ENCODE measurements at regions of chr10 and their contacts with region 1.

Region 1: DNA sequence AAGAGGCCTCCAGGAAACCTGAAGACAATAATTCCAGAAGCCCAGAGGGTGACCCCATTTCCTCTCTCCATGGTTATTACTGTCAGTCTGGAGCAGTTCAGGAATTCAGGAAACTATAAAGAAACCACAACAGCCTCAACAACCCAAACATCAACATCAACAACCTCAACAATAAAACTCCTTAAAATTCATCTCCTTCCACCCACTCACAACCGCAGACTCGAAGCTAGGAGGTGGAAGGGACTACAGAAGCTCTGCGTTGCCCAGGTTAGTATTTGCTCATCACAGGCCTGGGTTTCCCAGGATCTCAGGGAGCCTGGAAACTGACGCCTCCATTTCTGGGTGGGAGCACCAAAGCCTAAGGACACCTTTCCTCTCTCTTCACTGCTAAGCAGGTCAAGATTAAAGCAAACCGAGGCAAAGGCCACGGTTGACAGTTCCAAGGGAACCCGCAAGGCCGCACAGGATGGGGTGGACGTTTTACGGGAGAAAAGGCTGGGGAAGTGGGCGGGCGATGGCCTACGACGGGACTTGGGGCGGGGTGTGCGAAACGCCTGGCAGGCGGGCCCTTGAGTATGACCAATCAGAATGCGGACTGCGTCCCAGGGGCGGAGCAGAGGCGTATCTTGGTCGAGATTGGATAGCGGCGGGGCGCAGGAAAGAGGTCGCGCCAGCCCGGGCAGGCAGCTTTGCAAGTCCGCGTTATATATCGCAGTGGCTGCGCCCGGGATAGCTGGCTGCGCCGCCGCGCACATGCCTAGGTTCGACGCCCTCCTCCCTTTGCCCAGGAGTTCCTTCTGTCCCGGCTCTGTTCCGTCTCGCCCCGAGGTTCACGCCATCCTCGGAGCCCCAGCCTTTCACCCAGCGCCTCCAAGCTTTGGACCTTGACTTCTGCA is at the start of gene ELOVL3:
- DNase-seq: peak; percentile 96
- ATAC-seq: peak; percentile 84
- H3K4me3 ChIP-seq: peak within 1 kb of the TSS; percentile 19 to 51
- H3K27ac ChIP-seq: no peak within 1 kb of the TSS; the same call in 1 of the 2 replicates
- H3K4me1 ChIP-seq: peaks cover 17 to 28% of the 10 kb centered on the region in 2 experiments
- H3K27me3 ChIP-seq: no peaks in the 10 kb centered on the region
- CTCF ChIP-seq: no peak
- POLR2A ChIP-seq: peak; percentile 80
- RAD21 ChIP-seq: no peak
- total RNA-seq, gene ELOVL3: 5.5 TPM

Region 2: GRCh38 chr10:100803492-100803891 is 1422.4 kb before region 1 on chr10:
- CTCF ChIA-PET with region 1: no interaction called
- POLR2A ChIA-PET with region 1: no interaction called
- RAD21 ChIA-PET with region 1: no interaction called
- intact Hi-C with region 1: no loop called
- DNase-seq: no peak
- ATAC-seq: no peak
- H3K4me3 ChIP-seq: no peak overlapping the region
- H3K27ac ChIP-seq: no peak overlapping the region
- H3K4me1 ChIP-seq: no peaks in the 10 kb centered on the region
- H3K27me3 ChIP-seq: no peaks in the 10 kb centered on the region
- CTCF ChIP-seq: no peak
- POLR2A ChIP-seq: no peak
- RAD21 ChIP-seq: no peak

Region 3: DNA sequence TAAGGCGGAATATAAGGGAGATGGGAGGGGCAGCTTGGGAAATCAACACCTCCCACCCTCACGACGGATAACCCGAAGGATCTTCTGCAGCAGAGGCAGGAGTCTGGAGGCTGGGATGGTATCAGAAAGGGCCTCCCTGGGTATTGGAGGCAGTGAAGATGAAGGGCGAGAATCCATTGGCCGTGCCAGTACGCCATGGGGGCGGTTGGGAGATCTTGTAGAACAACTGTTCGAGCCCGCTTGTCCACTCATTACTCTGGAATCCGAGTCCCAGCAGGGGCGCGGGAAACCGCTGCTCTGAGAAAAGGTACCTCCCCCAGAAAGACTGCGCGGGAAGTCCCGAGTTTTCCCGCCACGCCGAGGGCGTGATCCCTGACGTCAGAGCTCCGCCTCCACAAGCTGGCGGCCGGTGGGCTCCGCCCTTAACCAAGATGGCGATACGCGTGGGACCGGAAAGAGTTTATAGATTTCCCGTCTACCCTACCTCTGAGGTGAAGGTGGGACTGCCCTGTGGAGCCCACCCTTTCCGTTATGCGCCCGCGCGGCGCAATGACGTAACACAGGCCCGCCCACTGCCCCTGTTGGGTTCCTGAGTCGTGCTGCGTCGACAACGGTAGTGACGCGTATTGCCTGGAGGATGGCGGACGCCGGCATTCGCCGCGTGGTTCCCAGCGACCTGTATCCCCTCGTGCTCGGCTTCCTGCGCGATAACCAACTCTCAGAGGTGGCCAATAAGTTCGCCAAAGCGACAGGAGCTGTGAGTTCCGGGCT is 73.9 kb before region 1 on chr10 and contains the start of gene NOLC1:
- CTCF ChIA-PET with region 1: interaction called, 11 read pairs
- POLR2A ChIA-PET with region 1: interaction called, 3 read pairs
- RAD21 ChIA-PET with region 1: no interaction called
- intact Hi-C with region 1: no loop called
- DNase-seq: peak; percentile 100
- ATAC-seq: peak; percentile 87
- H3K4me3 ChIP-seq: peak within 1 kb of the TSS; percentile 89 to 97
- H3K27ac ChIP-seq: peak within 1 kb of the TSS; percentile 76
- H3K4me1 ChIP-seq: peaks cover 27 to 50% of the 10 kb centered on the region in 2 experiments
- H3K27me3 ChIP-seq: no peaks in the 10 kb centered on the region
- CTCF ChIP-seq: no peak
- POLR2A ChIP-seq: peak; percentile 96
- RAD21 ChIP-seq: no peak
- total RNA-seq, gene NOLC1: 231 TPM

Region 4: GRCh38 chr10:102310361-102311024 is 84.6 kb after region 1 on chr10:
- CTCF ChIA-PET with region 1: interaction called, 23 read pairs
- POLR2A ChIA-PET with region 1: no interaction called
- RAD21 ChIA-PET with region 1: no interaction called
- intact Hi-C with region 1: no loop called
- DNase-seq: peak; percentile 61
- ATAC-seq: peak; percentile 87
- H3K4me3 ChIP-seq: peak overlapping the region in 1 of 2 experiments; percentile 12; a peak in 1 of 4 replicates
- H3K27ac ChIP-seq: peak overlapping the region; percentile 12; the same call in 1 of the 2 replicates
- H3K4me1 ChIP-seq: peaks cover 15 to 34% of the 10 kb centered on the region in 2 experiments
- H3K27me3 ChIP-seq: no peaks in the 10 kb centered on the region
- CTCF ChIP-seq: no peak
- POLR2A ChIP-seq: no peak
- RAD21 ChIP-seq: no peak

Region 5: GRCh38 chr10:102368072-102368471 is 142.2 kb after region 1 on chr10:
- CTCF ChIA-PET with region 1: interaction called, 10 read pairs
- POLR2A ChIA-PET with region 1: no interaction called
- RAD21 ChIA-PET with region 1: interaction called in 1 of 2 experiments, 3 read pairs
- intact Hi-C with region 1: no loop called
- DNase-seq: no peak
- ATAC-seq: peak; percentile 71; the same call in 1 of the 2 replicates
- H3K4me3 ChIP-seq: no peak overlapping the region
- H3K27ac ChIP-seq: peak overlapping the region; percentile 31; the same call in 1 of the 2 replicates
- H3K4me1 ChIP-seq: peaks cover 8 to 19% of the 10 kb centered on the region in 2 experiments; a peak in 3 of 4 replicates
- H3K27me3 ChIP-seq: no peaks in the 10 kb centered on the region
- CTCF ChIP-seq: no peak
- POLR2A ChIP-seq: no peak
- RAD21 ChIP-seq: no peak

Region 6: GRCh38 chr10:102399217-102400089 is 173.6 kb after region 1 on chr10:
- CTCF ChIA-PET with region 1: interaction called, 154 read pairs
- POLR2A ChIA-PET with region 1: interaction called, 15 read pairs
- RAD21 ChIA-PET with region 1: interaction called, 8 to 9 read pairs
- intact Hi-C with region 1: loop called (anchors 1 kb)
- DNase-seq: peak; percentile 80
- ATAC-seq: peak; percentile 75
- H3K4me3 ChIP-seq: peak overlapping the region; percentile 45 to 63
- H3K27ac ChIP-seq: peak overlapping the region; percentile 52
- H3K4me1 ChIP-seq: peaks cover 21 to 73% of the 10 kb centered on the region in 2 experiments
- H3K27me3 ChIP-seq: no peaks in the 10 kb centered on the region
- CTCF ChIP-seq: peak in 2 of 3 experiments; percentile 97 to 99; a peak in 4 of 6 replicates
- POLR2A ChIP-seq: peak; percentile 67
- RAD21 ChIP-seq: no peak

Region 7: DNA sequence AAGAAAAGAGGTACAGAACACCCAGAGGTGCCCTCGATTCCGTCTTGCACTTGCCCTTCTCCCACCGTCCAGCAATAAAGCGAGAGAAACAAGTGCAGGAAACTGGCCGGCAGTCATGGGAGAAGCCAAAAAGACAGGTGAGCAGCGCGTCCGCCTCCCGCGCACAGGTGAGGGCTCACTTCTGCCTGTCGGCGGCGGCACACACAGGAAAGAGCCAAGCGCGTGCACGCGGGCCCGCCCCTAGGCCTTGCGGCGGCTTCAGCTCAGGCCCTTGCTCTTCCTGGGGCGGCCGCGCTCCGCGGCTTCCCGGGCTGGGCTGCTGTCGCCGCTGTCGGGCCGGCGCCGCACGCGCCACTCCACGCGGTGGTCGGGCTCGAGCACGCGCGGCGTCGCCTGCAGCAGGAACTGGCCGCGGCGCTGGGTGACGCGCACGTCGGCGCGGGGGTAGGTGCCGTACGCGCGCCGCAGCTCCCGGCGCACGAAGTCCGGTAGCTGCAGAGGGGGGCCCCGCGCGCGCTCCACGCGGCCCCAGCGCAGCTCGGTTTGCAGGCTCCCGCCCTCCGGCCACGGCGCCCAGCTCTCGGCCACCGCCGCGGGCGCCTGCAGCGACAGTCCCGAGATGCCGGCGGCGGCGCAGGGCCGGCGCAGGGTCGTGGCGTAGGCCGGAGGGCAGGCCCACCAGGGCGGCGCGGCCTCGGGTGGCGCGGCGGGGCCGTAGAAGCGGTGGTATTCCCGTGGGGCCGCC is 224.5 kb after region 1 on chr10:
- CTCF ChIA-PET with region 1: interaction called, 16 read pairs
- POLR2A ChIA-PET with region 1: no interaction called
- RAD21 ChIA-PET with region 1: no interaction called
- intact Hi-C with region 1: no loop called
- DNase-seq: peak; percentile 82
- ATAC-seq: peak; percentile 76
- H3K4me3 ChIP-seq: peak overlapping the region; percentile 72 to 100
- H3K27ac ChIP-seq: peak overlapping the region; percentile 98
- H3K4me1 ChIP-seq: peaks cover 28 to 38% of the 10 kb centered on the region in 2 experiments
- H3K27me3 ChIP-seq: no peaks in the 10 kb centered on the region
- CTCF ChIP-seq: no peak
- POLR2A ChIP-seq: peak; percentile 94
- RAD21 ChIP-seq: no peak

Region 8: GRCh38 chr10:102503281-102504220 is 277.7 kb after region 1 on chr10 and contains the start of gene SUFU:
- CTCF ChIA-PET with region 1: interaction called, 23 read pairs
- POLR2A ChIA-PET with region 1: interaction called, 8 read pairs
- RAD21 ChIA-PET with region 1: no interaction called
- intact Hi-C with region 1: no loop called
- DNase-seq: peak; percentile 100
- ATAC-seq: peak; percentile 72
- H3K4me3 ChIP-seq: peak within 1 kb of the TSS; percentile 83 to 89
- H3K27ac ChIP-seq: peak within 1 kb of the TSS; percentile 59
- H3K4me1 ChIP-seq: peaks cover 13 to 27% of the 10 kb centered on the region in 2 experiments
- H3K27me3 ChIP-seq: no peaks in the 10 kb centered on the region
- CTCF ChIP-seq: peak in 2 of 3 experiments; percentile 94 to 99; a peak in 4 of 6 replicates
- POLR2A ChIP-seq: peak; percentile 53
- RAD21 ChIP-seq: no peak
- total RNA-seq, gene SUFU: 18.8 TPM